ENCODE measurements at regions of chr11 and their contacts with region 1.

Region 1: GRCh38 chr11:62923601-62924411 is 2.6 kb upstream of the CHRM1 start:
- DNase-seq: no peak
- ATAC-seq: no peak
- H3K4me3 ChIP-seq: peak overlapping the region in 1 of 2 experiments; percentile 10; a peak in 1 of 4 replicates
- H3K27ac ChIP-seq: no peak overlapping the region
- H3K4me1 ChIP-seq: peaks cover 7% of the 10 kb centered on the region; the same call in 1 of the 2 replicates
- H3K27me3 ChIP-seq: 0 out of 2 replicates have a peak, but pooled peaks cover 2% of the 10 kb centered on the region
- CTCF ChIP-seq: no peak

Region 2: DNA sequence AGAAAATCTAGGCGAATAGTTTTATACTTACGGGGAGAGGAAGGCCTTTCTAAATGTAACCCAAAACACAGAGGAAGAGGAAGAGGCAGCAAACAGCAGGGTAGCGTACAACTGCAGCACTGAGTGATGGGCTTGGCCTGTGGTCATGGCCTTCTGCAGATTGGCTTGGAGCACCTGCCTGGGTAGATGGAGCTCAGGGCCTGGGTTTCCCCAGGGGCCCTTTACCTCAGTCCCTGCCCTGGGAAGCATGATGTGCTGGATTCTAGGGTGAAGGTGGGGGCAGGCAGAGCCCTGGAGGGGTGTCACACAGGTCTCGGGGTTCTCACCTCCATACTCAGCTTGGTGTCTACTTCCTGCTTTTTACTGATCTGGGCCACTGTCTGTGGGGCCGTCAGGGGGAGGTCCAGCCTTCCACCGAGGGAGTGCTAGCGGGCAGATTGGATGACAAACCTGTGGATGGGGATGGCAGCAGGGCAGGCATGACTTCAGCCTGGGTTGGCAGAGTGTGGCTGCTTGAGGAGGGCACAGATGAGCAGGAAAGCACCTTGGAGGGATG is 25.0 kb after region 1 on chr11:
- CTCF ChIA-PET with region 1: interaction called, 10 read pairs
- POLR2A ChIA-PET with region 1: interaction called, 3 read pairs
- in situ Hi-C with region 1: no loop called
- intact Hi-C with region 1: no loop called
- DNase-seq: no peak
- ATAC-seq: no peak
- H3K4me3 ChIP-seq: no peak overlapping the region
- H3K27ac ChIP-seq: no peak overlapping the region
- H3K4me1 ChIP-seq: no peaks in the 10 kb centered on the region
- H3K27me3 ChIP-seq: peaks cover 3% of the 10 kb centered on the region; the same call in 1 of the 2 replicates
- CTCF ChIP-seq: no peak

Measured in Panc1 (cell line).